Right ventricle myocardium inferior (tissue), 1 donor: ENCODE measurements at regions of chr18 and their contacts with region 1.

Region 1: DNA sequence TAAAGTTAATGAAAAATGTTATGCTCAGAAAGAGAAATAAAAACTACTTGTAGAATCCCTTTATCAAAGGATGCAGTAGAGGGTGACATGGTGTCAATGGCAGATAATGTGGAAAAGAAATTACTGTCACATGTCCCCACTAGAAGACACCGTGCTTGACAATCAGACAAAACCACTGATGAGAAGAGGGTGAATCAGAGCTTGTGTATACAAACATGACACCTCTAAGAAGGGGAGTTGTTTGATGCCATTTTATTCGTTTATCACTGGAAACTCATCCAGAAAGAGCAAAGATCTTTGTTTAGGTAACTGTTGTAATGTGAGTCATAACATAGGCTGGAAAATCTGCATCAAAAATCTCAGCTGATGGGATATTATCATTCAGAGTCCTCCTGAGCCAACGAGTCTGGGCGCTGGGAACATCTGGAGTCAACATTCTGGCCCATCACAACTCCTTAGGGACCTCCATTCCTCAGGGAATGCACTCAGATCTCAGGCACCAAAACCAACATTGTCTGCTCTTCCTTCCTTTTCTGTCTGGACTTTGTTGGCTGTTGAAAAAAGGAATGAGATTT is 49.5 kb upstream of the RAB12 start:
- DNase-seq: no peak
- ATAC-seq: no peak

Region 2: GRCh38 chr18:8536226-8536625 is 23.5 kb before region 1 on chr18:
- intact Hi-C with region 1: no loop called
- DNase-seq: no peak
- ATAC-seq: no peak

Region 3: DNA sequence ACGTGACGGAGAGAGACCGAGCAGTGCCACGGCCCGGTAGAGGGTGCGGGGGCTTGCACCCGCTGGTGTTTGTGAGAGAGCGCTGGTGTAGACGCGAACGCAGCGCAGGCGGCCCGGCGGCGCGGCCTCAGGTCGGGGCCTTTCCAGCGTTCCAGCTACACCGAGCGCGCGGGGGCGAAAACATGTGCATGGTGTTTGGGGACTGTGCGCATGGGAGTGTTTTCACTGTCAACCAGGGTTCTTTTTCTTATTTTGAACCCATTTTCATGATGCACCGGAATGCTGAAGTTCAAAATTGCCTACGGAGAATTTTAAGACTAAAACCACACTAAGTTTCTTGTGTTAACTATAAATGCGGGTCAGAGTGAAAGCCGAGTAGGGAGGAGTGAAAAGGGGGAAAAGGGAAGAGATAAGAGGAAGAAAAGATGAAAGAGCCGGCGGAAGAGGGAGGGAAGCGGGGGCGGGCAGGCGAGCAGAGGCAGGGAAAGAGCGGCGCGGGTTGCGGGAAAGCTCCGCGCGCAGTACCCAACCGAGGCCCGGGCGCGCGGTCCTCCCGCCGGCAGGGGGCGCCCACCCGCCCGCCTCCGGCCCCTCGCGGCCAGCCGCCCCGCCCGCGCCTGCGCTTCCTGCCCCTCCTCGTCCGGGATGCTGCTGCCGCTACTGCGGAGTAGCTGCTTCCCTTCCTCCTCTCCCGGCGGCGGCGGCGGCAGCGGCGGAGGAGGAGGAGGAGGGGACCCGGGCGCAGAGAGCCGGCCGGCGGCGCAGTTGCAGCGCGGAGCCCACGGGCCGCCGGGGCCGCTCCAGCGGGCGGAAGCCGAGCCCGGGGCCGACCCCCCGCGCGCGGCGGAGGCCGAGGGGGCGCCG is 49.3 kb after region 1 on chr18 and contains the start of gene RAB12:
- intact Hi-C with region 1: loop called (anchors 5 kb)
- DNase-seq: peak; percentile 94
- ATAC-seq: peak; percentile 92
- total RNA-seq, gene RAB12: 113 TPM

Region 4: DNA sequence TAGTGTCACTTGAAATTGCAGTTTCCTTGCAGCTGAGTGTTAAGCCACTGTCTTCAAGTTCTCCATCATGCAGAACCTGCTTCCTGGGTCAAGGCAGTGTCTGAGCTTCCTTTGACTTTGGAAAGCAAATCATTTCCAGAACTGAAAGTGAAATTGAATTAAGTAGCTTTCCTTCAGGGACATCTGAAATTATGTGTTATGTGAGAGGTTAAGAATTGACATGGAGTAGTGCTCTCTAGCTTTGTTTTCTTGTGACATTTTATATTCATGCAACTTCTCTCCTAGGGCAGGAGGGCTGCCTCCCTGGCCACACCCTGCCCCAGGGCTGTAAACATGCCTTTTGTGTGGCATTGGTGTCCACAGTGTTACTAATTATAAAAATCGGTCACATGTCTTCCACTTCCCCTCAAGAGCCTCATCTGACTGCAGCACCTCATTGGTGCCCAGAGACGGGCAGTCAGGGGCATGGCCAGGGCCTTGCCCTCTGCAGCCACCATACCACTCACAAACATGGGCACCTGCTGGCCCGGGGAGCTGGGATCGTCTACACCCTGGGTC is 63.9 kb after region 1 on chr18:
- intact Hi-C with region 1: loop called (anchors 5 kb)
- DNase-seq: peak; percentile 65
- ATAC-seq: peak; percentile 93